ENCODE measurements at regions of chrX and their contacts with region 1.

Region 1: DNA sequence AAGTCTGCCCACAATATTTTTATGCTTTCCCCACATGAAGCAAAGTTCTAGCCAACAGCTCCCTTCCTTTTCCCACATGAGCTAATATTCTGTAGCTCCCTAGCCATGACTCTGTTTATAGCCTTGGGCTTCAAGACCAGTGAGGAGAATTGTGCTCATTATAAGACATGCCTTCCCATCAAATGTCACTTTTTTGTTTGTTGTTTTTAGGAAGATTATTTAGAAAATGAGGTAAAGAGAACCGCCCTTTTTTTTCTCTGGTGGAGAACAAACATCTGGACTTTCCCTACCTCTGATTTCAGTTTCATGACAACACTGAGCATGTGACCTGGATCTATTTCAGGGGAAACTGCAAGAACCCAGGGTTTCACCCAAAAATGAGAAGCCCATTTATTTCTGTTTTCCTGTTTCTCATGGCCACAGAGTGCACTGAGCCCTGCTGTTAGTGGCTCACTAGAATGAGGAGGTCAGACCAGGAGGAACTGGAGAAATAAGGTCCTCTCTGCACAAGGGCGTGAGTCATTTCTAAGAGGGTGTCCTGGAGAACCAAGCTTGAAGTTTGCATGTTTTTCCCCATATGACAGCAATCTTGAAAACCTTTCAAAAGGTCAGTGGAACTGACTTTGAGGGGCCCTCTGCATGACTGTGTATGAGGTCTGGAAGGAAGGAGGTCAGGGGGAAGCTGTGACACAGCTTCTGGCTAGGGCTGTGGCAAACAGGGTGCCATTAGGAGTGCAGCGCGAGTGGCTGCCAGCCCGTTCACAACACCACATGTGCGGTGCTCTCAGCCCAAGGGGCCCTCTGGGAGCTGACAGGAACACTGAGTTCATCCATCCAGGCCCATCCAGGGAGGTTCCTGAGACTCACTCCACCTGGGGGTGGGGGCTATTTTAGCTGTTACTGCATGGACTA is 55.2 kb downstream of the CHST7 start:
- DNase-seq: no peak
- H3K4me3 Mint-ChIP-seq: peak overlapping the region; percentile 47
- H3K27ac Mint-ChIP-seq: peak overlapping the region; percentile 88
- H3K4me1 Mint-ChIP-seq: peaks cover 33% of the 10 kb centered on the region
- H3K27me3 Mint-ChIP-seq: no peaks in the 10 kb centered on the region

Region 2: DNA sequence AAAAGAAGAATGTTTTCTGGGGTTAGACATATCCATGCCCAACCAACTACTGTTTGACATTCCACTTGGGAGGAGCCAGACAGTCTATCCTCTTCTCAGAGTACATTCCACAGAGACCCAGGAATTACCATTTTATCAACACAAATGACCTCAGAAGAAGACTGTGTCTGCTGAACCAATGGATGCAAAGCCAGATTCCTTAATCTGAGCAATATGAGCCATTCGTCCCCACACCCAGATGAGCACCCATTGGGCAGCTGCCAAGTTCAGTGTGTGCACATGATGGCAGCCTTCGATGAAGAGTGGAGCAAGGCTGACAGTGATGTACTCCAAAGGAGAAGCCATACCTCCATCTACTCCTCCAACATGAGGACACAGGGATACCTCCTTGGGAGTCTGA is 194.8 kb before region 1 on chrX:
- intact Hi-C with region 1: no loop called
- DNase-seq: no peak
- H3K4me3 Mint-ChIP-seq: no peak overlapping the region
- H3K27ac Mint-ChIP-seq: no peak overlapping the region
- H3K4me1 Mint-ChIP-seq: no peaks in the 10 kb centered on the region
- H3K27me3 Mint-ChIP-seq: no peaks in the 10 kb centered on the region

Region 3: GRCh38 chrX:46573331-46573891 is 55.3 kb before region 1 on chrX and contains the start of gene CHST7:
- intact Hi-C with region 1: loop called (anchors 2 kb)
- DNase-seq: peak; percentile 38
- H3K4me3 Mint-ChIP-seq: peak within 1 kb of the TSS; percentile 78
- H3K27ac Mint-ChIP-seq: peak within 1 kb of the TSS; percentile 42
- H3K4me1 Mint-ChIP-seq: peaks cover 32% of the 10 kb centered on the region
- H3K27me3 Mint-ChIP-seq: no peaks in the 10 kb centered on the region
- total RNA-seq, gene CHST7: 3.8 TPM in 2 replicates

Region 4: DNA sequence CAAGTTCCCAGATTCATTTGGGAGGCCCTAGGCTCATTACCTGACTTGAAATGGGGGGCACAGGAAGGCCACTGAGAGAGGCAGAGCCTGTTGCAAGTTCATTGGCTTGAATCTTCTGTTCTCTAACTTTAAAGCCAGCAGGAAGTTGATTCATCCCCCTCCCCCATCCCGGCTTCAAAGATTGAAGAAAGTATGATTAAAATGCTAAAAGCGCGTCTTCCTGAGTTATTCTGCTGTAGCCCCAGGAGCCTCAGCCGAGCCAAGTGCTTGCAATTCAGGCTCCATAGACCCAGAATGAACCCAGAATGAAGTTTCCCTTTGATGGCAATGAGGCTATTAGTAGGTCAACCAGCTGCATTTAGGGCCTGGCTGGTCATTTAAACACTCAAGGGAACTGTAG is 40.5 kb before region 1 on chrX:
- intact Hi-C with region 1: loop called (anchors 2 kb)
- DNase-seq: no peak
- H3K4me3 Mint-ChIP-seq: peak overlapping the region; percentile 65
- H3K27ac Mint-ChIP-seq: peak overlapping the region; percentile 84
- H3K4me1 Mint-ChIP-seq: peaks cover 21% of the 10 kb centered on the region
- H3K27me3 Mint-ChIP-seq: no peaks in the 10 kb centered on the region

Region 5: DNA sequence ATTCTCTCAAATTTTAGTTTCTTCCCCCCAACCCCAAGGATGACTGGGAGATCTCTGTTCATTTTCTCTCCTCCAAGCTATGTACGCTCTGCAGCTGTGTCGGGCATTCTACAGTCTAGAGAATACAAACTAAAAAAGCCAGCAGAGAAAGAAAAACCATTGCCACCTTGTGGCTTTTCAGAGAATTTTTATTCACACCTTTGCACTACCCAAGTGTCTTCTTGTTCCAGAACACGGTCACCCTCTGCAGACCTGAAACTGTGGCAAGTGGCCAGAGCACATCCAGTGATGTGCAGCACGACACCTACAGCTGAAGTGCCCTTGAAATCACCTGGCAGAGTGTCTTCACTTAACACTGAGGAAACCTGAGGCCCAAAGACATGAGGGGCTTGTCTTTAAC is 13.4 kb after region 1 on chrX:
- intact Hi-C with region 1: loop called (anchors 1 kb)
- DNase-seq: no peak
- H3K4me3 Mint-ChIP-seq: no peak overlapping the region
- H3K27ac Mint-ChIP-seq: peak overlapping the region; percentile 8
- H3K4me1 Mint-ChIP-seq: peaks cover 19% of the 10 kb centered on the region
- H3K27me3 Mint-ChIP-seq: no peaks in the 10 kb centered on the region

Region 6: GRCh38 chrX:46704767-46705386 is 76.2 kb after region 1 on chrX:
- intact Hi-C with region 1: loop called (anchors 2 kb)
- DNase-seq: peak; percentile 27
- H3K4me3 Mint-ChIP-seq: peak overlapping the region; percentile 51
- H3K27ac Mint-ChIP-seq: peak overlapping the region; percentile 96
- H3K4me1 Mint-ChIP-seq: peaks cover 54% of the 10 kb centered on the region
- H3K27me3 Mint-ChIP-seq: no peaks in the 10 kb centered on the region

Region 7: GRCh38 chrX:46722742-46723568 is 94.2 kb after region 1 on chrX:
- intact Hi-C with region 1: no loop called
- DNase-seq: no peak
- H3K4me3 Mint-ChIP-seq: no peak overlapping the region
- H3K27ac Mint-ChIP-seq: peak overlapping the region; percentile 58
- H3K4me1 Mint-ChIP-seq: peaks cover 41% of the 10 kb centered on the region
- H3K27me3 Mint-ChIP-seq: no peaks in the 10 kb centered on the region